ENCODE measurements at regions of chr16 and their contacts with region 1.

Region 1: DNA sequence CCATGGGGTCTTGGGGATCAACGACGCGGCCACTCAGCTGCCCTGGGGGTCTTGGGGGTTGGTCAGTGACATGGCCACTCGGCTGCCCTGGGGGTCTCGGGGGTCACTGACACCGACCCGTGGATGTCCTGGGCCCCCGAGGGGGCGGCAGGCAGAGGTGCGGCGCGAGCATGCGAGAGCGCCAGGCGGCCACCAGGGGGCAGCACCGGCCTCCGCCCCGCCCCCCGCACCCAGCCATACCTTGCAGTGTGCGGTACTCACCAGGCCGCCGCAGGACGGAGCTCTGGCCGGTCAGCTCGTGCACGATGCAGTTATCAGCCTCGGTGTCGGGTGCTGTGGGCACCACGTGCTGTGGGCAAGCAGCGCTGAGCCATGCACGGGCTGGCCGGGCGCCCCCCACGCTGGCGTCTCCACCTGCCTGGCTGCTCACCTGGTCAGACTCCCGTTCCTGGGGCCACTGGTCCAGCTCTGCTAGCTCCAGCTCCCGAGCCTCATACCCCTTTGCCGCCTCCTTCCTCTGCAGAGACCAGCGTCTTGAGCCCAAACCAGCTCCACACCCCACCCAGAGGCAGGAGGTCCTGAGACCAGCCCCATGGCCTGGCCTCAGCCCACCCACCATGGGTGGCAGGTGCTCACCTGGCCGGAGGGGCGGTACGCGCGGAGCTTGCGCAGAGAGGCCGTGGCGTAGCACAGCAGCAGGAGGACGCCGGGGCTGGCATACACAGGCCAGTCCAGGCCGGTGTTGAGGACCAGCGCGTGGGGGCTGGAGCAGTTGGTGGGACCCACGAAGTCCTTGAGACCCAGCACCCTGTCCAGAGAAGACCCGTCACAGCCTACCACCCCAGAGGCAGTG is 31.2 kb downstream of the CTU2 start:
- DNase-seq: no peak
- H3K4me3 ChIP-seq: no peak overlapping the region
- H3K27ac ChIP-seq: no peak overlapping the region
- H3K4me1 ChIP-seq: peaks cover 32% of the 10 kb centered on the region
- H3K27me3 ChIP-seq: no peaks in the 10 kb centered on the region
- CTCF ChIP-seq: peak; percentile 98 to 99 (median 98)
- POLR2A ChIP-seq: no peak

Region 2: GRCh38 chr16:88785106-88785924 is 47.8 kb after region 1 on chr16 and contains the start of gene PIEZO1:
- intact Hi-C with region 1: loop called (anchors 2 kb)
- DNase-seq: no peak
- H3K4me3 ChIP-seq: peak within 1 kb of the TSS; percentile 72 to 95
- H3K27ac ChIP-seq: peak within 1 kb of the TSS; percentile 96
- H3K4me1 ChIP-seq: peaks cover 44% of the 10 kb centered on the region
- H3K27me3 ChIP-seq: no peaks in the 10 kb centered on the region
- CTCF ChIP-seq: peak; percentile 93 to 95 (median 94)
- POLR2A ChIP-seq: peak in 1 of 2 donors; percentile 56
- total RNA-seq, gene PIEZO1: 184 TPM

Region 3: DNA sequence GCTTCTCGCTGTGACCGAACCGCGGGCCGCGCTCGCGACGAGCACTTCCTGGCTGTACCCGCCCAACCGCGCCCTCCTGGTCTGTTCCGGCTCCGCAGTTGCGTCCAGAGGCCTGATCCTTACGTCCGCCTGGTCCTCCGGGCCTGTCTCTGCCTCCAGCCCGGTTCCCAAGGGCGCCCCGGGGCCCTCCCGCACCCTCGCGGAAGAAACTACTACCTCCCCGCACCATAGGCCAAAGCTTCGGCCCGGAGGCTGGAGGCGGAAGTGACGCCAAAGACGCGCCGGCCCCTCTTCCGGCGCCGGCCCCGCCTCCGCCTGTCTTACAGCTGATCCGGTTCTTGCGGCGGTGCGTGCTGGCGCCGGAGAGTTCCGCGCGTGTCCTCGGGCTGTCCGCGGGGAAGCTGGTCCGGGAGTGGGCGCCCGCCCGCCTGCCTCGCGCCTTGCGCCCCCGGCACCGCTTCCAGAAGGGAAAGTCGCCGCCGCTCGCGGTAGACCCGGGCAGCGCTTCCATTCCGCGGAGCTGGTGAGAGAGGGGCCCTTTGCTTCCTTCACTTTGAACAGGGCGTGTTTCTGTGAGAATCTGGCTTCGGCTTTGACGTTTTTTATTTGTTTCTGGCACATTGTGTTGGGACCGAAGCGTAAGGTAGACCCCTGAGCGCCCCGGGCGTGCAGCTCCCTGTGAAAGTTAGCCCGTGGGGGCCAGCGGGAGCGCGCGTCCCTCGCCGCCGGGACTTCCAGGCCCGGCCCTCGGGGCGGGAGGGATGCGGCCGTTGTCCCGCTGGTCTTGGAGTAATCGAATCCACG is 480.1 kb after region 1 on chr16 and contains the start of gene ZNF778:
- intact Hi-C with region 1: loop called (anchors 5 kb)
- DNase-seq: no peak
- H3K4me3 ChIP-seq: peak within 1 kb of the TSS; percentile 66 to 71
- H3K27ac ChIP-seq: peak within 1 kb of the TSS; percentile 93
- H3K4me1 ChIP-seq: peaks cover 35% of the 10 kb centered on the region
- H3K27me3 ChIP-seq: no peaks in the 10 kb centered on the region
- CTCF ChIP-seq: peak in 1 of 3 experiments; percentile 12
- POLR2A ChIP-seq: peak in 1 of 2 donors; percentile 66
- total RNA-seq, gene ZNF778: 6.6 TPM

Measured in vagina (tissue), 2 donors.